Activated naive CD4-positive, alpha-beta T cell treated with anti-CD3 and anti-CD28 coated beads for 36 hours (primary cell): ENCODE measurements at regions of chr2 and their contacts with region 1.

Region 1: DNA sequence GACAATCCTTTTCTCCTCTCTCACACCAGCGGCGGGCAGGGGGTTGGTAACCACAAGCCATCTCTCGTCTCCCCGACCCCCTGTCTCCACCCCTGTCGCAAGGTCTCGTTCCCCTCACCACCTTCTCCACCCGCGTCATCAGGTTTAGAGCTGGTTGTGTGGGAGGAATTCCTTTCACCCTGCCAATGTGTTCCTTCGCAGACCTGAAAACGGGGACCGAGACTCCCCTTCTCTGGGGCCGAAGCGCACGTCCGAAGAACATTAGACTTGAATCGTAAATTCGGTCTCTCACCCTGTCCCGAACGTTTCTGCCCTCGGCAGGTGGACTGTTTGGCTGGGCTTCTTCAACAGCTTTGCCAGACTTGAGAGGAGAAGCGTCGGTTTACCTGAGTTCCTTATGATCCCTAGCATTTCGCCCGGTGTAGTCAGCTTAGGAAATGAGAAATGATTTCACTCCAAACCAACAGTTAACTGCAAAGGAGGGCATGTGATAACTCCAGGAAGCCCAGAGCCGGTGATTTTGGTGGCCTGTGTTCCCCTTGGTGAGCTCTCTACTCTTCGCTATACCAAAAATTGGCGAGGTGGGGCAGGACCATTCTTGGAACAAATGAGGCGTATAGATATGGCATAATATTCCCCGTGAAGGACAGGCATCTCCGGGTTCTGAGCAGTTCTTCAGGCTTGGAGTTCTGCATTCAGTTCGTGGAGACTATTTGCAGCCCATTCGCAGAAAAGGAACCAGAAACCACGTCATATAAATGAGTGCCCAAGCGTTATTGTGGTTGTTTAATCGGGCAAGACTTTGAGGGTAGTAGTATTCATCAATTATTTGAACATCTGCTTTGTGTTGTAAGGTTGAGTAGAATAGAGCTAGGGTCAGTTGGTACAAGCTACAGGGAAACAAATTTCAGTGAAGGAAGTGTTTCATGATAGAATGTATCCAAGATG is 694 bp downstream of the CFAP36 start:
- DNase-seq: peak; percentile 45
- H3K4me3 Mint-ChIP-seq: peak overlapping the region; percentile 99
- H3K27ac Mint-ChIP-seq: peak overlapping the region; percentile 96
- H3K4me1 Mint-ChIP-seq: peaks cover 14% of the 10 kb centered on the region
- H3K27me3 Mint-ChIP-seq: no peaks in the 10 kb centered on the region

Region 2: DNA sequence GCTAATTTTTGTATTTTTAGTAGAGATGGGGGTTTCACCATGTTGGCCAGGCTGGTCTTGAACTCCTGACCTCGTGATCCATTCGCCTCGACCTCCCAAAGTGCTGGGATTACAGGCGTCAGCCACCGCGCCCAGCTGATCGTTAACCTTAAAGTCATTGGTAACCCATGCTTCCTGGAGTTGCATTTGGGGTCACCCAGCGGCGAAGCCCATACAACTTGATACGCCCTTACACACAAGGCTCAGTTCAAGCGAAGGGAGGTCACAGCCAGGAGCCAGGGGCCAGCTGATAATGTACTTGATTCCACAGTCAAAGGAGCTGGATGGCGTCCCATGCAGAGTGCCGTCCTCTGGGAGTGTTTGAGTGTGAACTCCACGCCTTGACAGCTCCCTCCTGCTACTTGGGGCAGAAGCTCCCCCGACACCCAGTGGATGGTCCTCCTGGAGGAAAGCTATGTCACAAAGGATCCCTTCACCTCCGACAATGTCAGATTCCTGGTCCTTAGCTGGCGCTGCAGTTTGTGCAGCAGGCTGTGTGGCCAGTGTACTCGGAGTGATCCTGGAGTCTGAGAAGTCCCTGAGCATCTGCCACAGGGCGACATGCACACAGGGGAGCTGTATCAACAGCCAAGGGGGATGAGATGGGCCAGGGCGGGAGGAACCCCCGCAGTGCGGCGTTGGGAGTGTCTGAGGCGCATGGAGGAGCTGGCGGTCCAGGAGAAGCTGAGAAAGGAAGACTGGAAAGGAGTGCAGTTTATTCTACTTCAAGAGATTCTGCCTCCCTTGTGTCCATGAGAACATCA is 296.1 kb before region 1 on chr2:
- CTCF ChIA-PET with region 1: no interaction called
- intact Hi-C with region 1: loop called (anchors 2 kb)
- DNase-seq: no peak
- H3K4me3 Mint-ChIP-seq: peak overlapping the region; percentile 71
- H3K27ac Mint-ChIP-seq: peak overlapping the region; percentile 68
- H3K4me1 Mint-ChIP-seq: peaks cover 36% of the 10 kb centered on the region
- H3K27me3 Mint-ChIP-seq: no peaks in the 10 kb centered on the region

Region 3: DNA sequence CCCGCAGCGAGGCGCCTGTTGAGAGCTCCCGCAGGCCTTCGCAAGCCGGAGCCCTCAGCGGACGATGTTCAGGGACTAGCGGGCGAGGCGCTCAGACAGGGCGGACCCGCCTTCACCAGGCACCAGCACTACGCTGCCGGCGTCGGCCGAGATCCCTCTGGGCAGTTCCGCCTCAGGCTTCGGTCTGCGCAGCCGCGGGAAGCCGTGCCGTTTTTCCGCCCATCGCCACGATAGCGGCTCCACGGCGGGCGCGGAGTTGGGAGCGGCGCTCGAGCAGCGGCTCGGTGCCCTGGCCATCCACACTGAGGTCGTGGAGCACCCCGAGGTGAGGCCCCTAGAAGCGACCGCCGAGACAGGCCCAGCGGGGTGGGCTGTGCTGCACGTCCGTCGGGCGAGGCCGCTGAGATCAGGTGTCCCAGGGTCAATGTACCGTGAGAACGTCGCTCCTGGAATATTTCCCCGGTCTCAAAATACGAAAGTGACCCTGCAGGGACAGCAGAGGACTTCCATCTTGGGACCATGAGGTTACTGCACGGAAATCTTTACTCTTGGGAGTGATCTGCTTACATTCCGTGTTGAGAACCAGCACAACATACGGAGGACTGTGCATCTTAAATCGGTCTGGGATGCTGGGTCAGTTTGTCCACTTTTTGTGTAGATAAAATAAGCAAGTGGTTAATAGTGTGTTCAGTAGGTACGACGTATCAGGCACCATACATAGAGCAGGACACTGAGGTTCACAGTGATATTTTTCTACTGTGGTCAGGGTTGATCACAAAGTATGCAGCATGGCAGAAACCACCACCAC is 237.9 kb before region 1 on chr2:
- CTCF ChIA-PET with region 1: no interaction called
- intact Hi-C with region 1: loop called (anchors 1 kb)
- DNase-seq: peak; percentile 85
- H3K4me3 Mint-ChIP-seq: peak overlapping the region; percentile 84
- H3K27ac Mint-ChIP-seq: peak overlapping the region; percentile 85
- H3K4me1 Mint-ChIP-seq: peaks cover 22% of the 10 kb centered on the region
- H3K27me3 Mint-ChIP-seq: no peaks in the 10 kb centered on the region

Region 4: DNA sequence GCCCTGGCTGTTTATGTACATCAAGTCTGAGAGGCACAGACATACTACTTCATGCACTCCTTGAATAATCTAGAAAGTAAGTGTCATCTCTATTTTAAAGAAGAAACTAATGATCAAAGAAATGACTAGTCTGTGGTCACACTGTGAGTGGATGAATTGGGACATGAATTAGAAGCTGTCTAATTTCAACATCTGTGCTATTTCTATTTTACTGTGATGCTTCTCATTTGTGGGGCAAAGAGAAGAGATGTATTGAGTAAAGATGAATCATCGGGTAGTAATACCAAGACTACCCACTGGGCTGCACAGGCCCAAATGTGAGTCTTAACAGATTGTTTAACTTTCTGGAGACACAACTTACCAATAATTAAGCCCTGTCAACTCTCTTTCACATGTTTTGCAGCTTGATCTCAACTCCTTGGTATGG is 208.8 kb before region 1 on chr2:
- CTCF ChIA-PET with region 1: interaction called, 3 read pairs
- intact Hi-C with region 1: loop called (anchors 1 kb)
- DNase-seq: peak; percentile 63
- H3K4me3 Mint-ChIP-seq: no peak overlapping the region
- H3K27ac Mint-ChIP-seq: peak overlapping the region; percentile 57
- H3K4me1 Mint-ChIP-seq: peaks cover 25% of the 10 kb centered on the region
- H3K27me3 Mint-ChIP-seq: no peaks in the 10 kb centered on the region

Region 5: DNA sequence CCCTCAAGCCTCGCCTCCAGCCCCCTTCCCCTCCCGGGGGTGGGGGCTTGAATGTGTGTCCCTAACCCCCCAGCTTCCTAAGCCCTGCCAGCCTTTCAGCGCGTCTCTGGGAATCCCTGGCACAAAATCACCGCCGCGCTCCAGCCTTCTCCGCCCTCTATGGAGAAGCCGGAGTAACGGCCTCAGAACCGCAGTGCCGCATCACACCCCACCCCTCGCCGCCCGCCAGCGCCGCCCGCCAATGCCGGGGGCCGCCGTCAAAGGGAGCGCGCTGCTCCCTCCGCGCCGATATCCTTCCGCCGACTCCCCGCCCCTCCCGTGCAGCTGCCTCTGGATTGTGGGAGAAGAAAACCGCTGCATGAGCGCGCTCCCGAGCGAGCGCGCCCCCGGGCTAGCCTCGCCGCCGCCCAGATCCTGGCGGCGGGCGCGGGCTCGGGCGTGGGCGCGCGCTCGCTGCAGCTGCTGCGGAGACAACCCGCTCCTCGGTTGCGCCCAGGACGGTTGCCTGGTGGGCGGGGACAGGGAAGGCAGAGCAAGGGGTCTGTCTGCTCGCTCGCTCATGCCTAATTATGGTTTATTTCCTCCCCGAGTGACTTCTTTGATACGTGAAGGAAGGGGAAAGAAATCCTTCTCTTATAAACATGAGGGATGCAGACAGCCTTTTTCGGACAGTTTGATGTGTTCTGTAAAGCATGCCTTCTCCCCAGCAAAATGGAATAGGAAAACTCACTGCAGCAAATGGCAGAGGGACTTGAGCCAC is 100.4 kb before region 1 on chr2 and contains the start of gene CCDC88A:
- CTCF ChIA-PET with region 1: no interaction called
- intact Hi-C with region 1: loop called (anchors 1 kb)
- DNase-seq: peak; percentile 89
- H3K4me3 Mint-ChIP-seq: peak within 1 kb of the TSS; percentile 86
- H3K27ac Mint-ChIP-seq: peak within 1 kb of the TSS; percentile 53
- H3K4me1 Mint-ChIP-seq: peaks cover 18% of the 10 kb centered on the region
- H3K27me3 Mint-ChIP-seq: peaks cover 10% of the 10 kb centered on the region
- total RNA-seq, gene CCDC88A: 9.7 to 10.7 TPM

Region 6: GRCh38 chr2:55500025-55500424 is 20.2 kb before region 1 on chr2:
- CTCF ChIA-PET with region 1: no interaction called
- intact Hi-C with region 1: no loop called
- DNase-seq: no peak
- H3K4me3 Mint-ChIP-seq: no peak overlapping the region
- H3K27ac Mint-ChIP-seq: no peak overlapping the region
- H3K4me1 Mint-ChIP-seq: no peaks in the 10 kb centered on the region
- H3K27me3 Mint-ChIP-seq: no peaks in the 10 kb centered on the region

Region 7: DNA sequence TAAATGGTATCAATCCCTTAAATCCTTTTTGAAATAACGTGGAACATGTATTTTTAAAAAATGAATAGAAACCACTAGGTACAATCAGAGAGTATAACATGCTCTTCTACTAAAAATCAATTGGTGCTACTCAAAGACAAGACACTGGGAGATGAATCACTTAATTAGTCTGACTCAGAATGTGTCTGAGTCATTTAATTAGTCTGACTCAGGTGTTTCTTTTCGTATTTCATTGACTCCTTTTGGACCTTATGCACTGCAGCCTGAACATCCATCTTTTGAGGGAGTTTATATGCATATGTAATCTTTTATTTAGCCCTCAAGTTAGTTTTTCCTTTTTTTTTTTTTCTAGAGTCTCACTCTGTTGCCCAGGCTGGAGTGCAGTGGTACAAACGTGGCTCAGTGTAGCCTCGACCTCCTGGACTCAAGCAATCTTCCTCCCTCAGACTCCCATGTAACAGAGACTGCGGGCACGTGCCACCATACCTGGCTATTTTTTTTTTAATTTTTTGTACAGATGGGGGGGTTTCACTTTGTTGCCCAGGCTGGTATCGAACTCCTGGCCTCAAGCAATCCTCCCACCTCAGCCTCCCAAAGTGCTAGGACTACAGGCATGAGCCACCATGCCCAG is 70.7 kb after region 1 on chr2:
- CTCF ChIA-PET with region 1: interaction called, 4 read pairs
- intact Hi-C with region 1: loop called (anchors 1 kb)
- DNase-seq: no peak
- H3K4me3 Mint-ChIP-seq: no peak overlapping the region
- H3K27ac Mint-ChIP-seq: no peak overlapping the region
- H3K4me1 Mint-ChIP-seq: peaks cover 40% of the 10 kb centered on the region
- H3K27me3 Mint-ChIP-seq: no peaks in the 10 kb centered on the region

Region 8: GRCh38 chr2:55693181-55694134 is 173.2 kb after region 1 on chr2 and contains the start of gene PNPT1:
- CTCF ChIA-PET with region 1: no interaction called
- intact Hi-C with region 1: loop called (anchors 1 kb)
- DNase-seq: peak; percentile 96
- H3K4me3 Mint-ChIP-seq: peak within 1 kb of the TSS; percentile 92
- H3K27ac Mint-ChIP-seq: peak within 1 kb of the TSS; percentile 86
- H3K4me1 Mint-ChIP-seq: peaks cover 34% of the 10 kb centered on the region
- H3K27me3 Mint-ChIP-seq: no peaks in the 10 kb centered on the region
- total RNA-seq, gene PNPT1: 54.1 to 60.7 TPM